Activated CD8-positive, alpha-beta T cell treated with anti-CD3 and anti-CD28 coated beads for 36 hours (primary cell): ENCODE measurements at regions of chr13 and their contacts with region 1.

Region 1: GRCh38 chr13:77492982-77493381 is 42.5 kb upstream of the SCEL start:
- DNase-seq: peak; percentile 28
- ATAC-seq: peak; percentile 45
- H3K4me3 Mint-ChIP-seq: no peak overlapping the region
- H3K27ac Mint-ChIP-seq: no peak overlapping the region
- H3K4me1 Mint-ChIP-seq: no peaks in the 10 kb centered on the region
- H3K27me3 Mint-ChIP-seq: no peaks in the 10 kb centered on the region
- CTCF ChIP-seq: peak; percentile 49

Region 2: DNA sequence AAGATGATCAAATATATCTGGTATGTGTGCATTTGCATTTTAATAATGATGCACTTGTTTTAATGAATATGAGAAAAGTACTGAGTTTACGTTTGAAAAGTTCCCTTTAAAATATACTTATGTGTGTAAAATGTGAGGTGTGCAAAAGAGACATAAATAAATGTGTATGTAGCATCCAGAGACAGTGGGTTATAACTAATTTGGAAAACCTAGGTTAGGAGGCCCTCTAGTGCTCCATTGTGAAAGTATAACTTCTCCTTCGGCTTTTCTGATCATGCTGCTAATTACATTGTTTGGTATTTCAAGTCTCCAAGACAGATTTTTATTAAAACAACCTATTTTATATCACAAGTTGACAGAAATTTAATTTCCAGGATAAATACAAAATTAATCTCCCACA is 72.7 kb after region 1 on chr13:
- CTCF ChIA-PET with region 1: interaction called, 18 read pairs
- POLR2A ChIA-PET with region 1: no interaction called
- intact Hi-C with region 1: loop called (anchors 5 kb)
- DNase-seq: no peak
- ATAC-seq: no peak
- H3K4me3 Mint-ChIP-seq: no peak overlapping the region
- H3K27ac Mint-ChIP-seq: no peak overlapping the region
- H3K4me1 Mint-ChIP-seq: no peaks in the 10 kb centered on the region
- H3K27me3 Mint-ChIP-seq: peaks cover 8% of the 10 kb centered on the region
- CTCF ChIP-seq: peak; percentile 64